ENCODE measurements at regions of chr19 and their contacts with region 1.

Region 1: DNA sequence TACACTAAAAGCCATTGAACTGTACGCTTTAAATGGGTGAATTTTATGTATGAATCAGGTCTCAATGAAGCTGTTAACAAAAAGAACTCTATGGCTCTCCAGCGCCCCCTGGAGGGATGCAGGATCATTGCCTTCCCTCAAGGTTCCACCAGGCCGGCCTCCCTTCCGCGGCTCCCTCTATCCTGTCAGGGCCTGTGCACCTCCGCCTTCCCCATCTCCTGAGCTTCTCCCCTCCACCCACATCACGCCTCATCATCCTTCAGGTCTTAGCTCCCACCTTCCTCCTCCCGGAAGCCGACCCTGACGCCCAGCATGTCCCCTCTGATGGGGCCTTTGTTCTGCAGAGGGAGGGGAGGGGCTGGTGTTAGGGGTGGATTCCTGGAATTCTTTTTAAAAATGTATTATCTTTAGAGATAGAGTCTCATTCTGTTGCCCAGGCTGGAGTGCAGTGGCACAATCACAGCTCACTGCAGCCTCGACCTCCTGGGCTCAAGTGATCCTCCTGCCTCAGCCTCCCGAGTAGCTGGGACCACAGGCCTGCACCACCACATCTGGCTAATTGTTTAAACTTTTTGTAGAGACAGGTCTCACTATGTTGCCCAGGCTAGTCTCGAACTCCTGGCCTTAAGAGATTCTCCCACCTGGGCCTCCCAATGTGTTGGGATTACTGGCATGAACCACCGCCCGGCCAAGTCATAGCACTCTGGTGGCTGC is 27.7 kb downstream of the MEIS3 start:
- H3K4me3 ChIP-seq: no peak overlapping the region
- H3K27ac ChIP-seq: no peak overlapping the region
- H3K4me1 ChIP-seq: no peaks in the 10 kb centered on the region
- CTCF ChIP-seq: peak; percentile 60; the same call in 1 of the 2 replicates

Region 2: GRCh38 chr19:47273313-47273977 is 118.2 kb before region 1 on chr19:
- CTCF ChIA-PET with region 1: interaction called, 11 read pairs
- POLR2A ChIA-PET with region 1: no interaction called
- H3K4me3 ChIP-seq: peak overlapping the region; percentile 58
- H3K27ac ChIP-seq: peak overlapping the region; percentile 97
- H3K4me1 ChIP-seq: peaks cover 11% of the 10 kb centered on the region
- CTCF ChIP-seq: no peak

Region 3: GRCh38 chr19:47296036-47296435 is 95.6 kb before region 1 on chr19:
- CTCF ChIA-PET with region 1: interaction called, 48 read pairs
- POLR2A ChIA-PET with region 1: interaction called, 3 read pairs
- H3K4me3 ChIP-seq: no peak overlapping the region
- H3K27ac ChIP-seq: no peak overlapping the region
- H3K4me1 ChIP-seq: no peaks in the 10 kb centered on the region
- CTCF ChIP-seq: peak; percentile 70

Region 4: DNA sequence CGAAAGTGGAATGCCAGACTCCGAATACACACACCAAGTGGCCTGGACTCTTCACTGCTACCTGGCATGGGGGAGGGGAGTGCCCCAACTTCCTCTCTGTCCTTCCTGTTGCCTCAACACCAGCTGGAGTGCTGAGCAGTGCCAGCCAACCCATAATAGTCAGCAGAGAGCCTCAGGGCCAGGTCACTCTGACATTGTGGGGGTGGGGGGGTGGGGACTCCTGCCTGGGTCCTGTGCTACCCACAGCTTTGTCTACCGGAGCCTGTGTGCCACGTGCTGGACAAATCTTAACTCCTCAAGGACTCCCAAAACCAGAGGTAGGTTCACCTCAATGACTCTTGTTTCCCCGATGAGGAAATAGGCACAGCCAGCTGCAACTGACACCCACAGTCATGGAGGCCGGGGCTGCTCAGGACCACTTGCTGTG is 54.8 kb before region 1 on chr19:
- CTCF ChIA-PET with region 1: interaction called, 10 read pairs
- POLR2A ChIA-PET with region 1: no interaction called
- H3K4me3 ChIP-seq: no peak overlapping the region
- H3K27ac ChIP-seq: no peak overlapping the region
- H3K4me1 ChIP-seq: no peaks in the 10 kb centered on the region
- CTCF ChIP-seq: no peak

Region 5: GRCh38 chr19:47417107-47417745 is 25.6 kb after region 1 on chr19:
- CTCF ChIA-PET with region 1: interaction called, 13 read pairs
- POLR2A ChIA-PET with region 1: no interaction called
- H3K4me3 ChIP-seq: no peak overlapping the region
- H3K27ac ChIP-seq: no peak overlapping the region
- H3K4me1 ChIP-seq: peaks cover 6% of the 10 kb centered on the region
- CTCF ChIP-seq: no peak

Measured in HEK293 (cell line).